Left cardiac atrium (tissue), 4 donors: ENCODE measurements at regions of chr9 and their contacts with region 1.

Region 1: DNA sequence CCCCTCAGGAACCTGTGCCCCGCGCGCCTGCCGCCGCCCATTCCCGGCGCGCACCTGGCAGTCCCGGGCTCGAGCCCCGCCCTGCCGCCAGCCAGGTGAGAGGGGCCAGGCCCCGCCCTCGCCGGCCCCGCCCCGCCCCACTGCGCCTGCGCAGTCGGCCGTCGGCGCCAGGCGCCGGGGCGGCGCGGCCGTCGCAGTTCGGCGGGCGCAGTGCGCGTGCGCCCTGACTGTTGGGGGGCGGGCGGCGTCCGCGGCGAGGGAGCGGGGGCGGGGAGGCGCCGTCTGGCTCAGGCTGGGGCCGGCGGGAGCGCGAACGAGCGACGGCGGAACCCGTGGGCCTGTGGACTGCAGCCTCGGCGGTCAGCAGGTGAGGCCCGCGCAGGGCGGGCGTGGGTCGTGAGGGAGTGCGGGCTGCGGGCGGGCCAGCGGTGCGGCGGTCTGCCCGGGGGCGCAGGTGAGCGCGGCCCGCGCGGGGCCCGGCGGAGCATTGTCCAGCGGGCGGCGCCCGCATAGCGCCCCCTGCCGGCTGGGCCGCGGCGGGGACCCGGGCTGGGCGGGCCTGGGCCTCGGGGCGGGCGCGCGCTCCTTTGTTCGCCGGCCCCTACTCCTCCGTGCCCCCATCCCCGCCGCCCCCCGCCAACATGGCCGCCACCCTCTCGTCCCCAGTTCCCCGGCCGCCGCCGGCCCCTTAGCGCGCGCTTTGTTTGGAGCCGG is at the start of gene SPIN1:
- DNase-seq: peak; percentile 83
- ATAC-seq: peak; percentile 90 to 91
- total RNA-seq, gene SPIN1: 55.6 to 56.3 TPM

Region 2: GRCh38 chr9:88308831-88309560 is 79.3 kb before region 1 on chr9:
- intact Hi-C with region 1: loop called in 1 of 2 experiments (anchors 5 kb)
- DNase-seq: no peak
- ATAC-seq: no peak

Region 3: GRCh38 chr9:88476491-88477271 is 88.4 kb after region 1 on chr9:
- intact Hi-C with region 1: no loop called
- DNase-seq: no peak
- ATAC-seq: no peak

Region 4: GRCh38 chr9:88614359-88614758 is 226.0 kb after region 1 on chr9:
- intact Hi-C with region 1: no loop called
- DNase-seq: no peak
- ATAC-seq: no peak